Calu3 (cell line): ENCODE measurements at regions of chr1 and their contacts with region 1.

Region 1: GRCh38 chr1:90973897-90974798 is 47.7 kb downstream of the ZNF644 start:
- DNase-seq: no peak
- H3K4me3 Mint-ChIP-seq: no peak overlapping the region
- H3K27ac Mint-ChIP-seq: peak overlapping the region; percentile 33
- H3K4me1 Mint-ChIP-seq: peaks cover 25% of the 10 kb centered on the region
- H3K27me3 Mint-ChIP-seq: no peaks in the 10 kb centered on the region
- CTCF ChIP-seq: no peak

Region 2: DNA sequence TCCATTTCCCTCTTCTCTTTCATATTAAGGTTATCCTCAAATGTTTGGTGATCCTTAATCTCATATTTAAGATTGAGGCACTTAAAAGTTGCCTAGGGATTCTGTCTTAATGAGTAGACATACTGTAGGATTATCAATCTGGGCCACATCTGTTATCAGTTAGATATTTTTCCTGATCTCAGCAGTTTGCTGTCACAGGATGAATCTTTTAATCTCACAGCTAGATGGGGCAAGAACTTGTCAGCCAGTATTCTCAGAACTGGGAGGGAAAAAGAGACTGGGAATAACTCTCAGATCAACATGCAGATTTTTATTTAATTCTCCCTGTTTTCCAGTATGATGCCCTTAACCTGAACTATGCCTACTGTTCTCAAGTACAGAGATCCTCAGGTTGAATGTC is 33.7 kb after region 1 on chr1:
- CTCF ChIA-PET with region 1: no interaction called
- intact Hi-C with region 1: loop called (anchors 5 kb)
- DNase-seq: no peak
- H3K4me3 Mint-ChIP-seq: no peak overlapping the region
- H3K27ac Mint-ChIP-seq: no peak overlapping the region
- H3K4me1 Mint-ChIP-seq: peaks cover 70% of the 10 kb centered on the region
- H3K27me3 Mint-ChIP-seq: no peaks in the 10 kb centered on the region
- CTCF ChIP-seq: no peak